Caco-2 (cell line): ENCODE measurements at regions of chr14 and their contacts with region 1.

Region 1: DNA sequence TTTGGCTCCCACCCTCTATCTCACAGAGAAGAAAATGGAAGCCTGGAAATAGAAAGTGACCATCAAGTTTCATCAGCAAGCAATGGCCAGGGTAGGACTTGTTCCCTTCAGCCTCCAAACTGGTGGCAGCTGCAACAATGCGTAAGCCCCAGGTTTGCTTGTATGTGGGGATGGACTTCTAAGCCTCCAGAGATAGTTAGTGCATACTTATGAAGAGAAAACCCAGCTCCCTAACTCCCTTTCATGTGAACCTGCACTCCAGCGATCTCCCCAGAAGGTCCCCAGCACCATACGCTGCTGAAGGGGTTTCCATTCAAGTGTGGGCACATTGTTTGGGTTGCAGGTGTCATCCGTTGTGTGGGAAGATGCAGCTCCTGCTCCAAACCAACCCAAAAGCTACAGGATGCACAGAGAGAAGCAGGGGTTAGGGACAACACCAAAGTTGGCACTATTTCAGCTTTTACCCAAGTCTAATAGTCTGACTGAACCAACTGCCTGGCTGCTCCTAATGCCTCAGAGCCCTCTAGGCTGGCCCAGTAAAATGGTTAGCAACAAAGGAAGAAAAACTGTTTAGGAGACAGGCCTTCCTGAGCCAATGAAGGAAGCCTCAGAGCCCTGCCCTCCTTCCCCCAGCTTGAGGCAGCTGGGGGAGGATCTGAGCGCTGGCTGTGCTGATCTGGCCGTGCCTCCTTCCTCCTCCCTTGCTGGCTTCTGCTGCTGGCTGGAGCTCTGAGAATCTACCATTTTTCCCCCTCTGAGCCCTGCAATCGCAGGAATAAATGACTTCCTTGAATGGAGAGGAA is 12.3 kb downstream of the ZFP36L1 start:
- DNase-seq: peak; percentile 21 to 35
- H3K4me3 ChIP-seq: no peak overlapping the region
- H3K4me3 Mint-ChIP-seq: peak overlapping the region; percentile 21
- H3K27ac Mint-ChIP-seq: peak overlapping the region; percentile 79
- H3K4me1 ChIP-seq: peaks cover 78% of the 10 kb centered on the region
- H3K4me1 Mint-ChIP-seq: peaks cover 39% of the 10 kb centered on the region
- H3K27me3 ChIP-seq: no peaks in the 10 kb centered on the region
- H3K27me3 Mint-ChIP-seq: no peaks in the 10 kb centered on the region
- CTCF ChIP-seq: no peak

Region 2: GRCh38 chr14:68137704-68138619 is 642.6 kb before region 1 on chr14:
- CTCF ChIA-PET with region 1: no interaction called
- POLR2A ChIA-PET with region 1: no interaction called
- intact Hi-C with region 1: no loop called
- DNase-seq: peak; percentile 35 to 72
- H3K4me3 ChIP-seq: no peak overlapping the region
- H3K4me3 Mint-ChIP-seq: no peak overlapping the region
- H3K27ac Mint-ChIP-seq: no peak overlapping the region
- H3K4me1 ChIP-seq: peaks cover 27% of the 10 kb centered on the region
- H3K4me1 Mint-ChIP-seq: peaks cover 7% of the 10 kb centered on the region
- H3K27me3 ChIP-seq: no peaks in the 10 kb centered on the region
- H3K27me3 Mint-ChIP-seq: no peaks in the 10 kb centered on the region
- CTCF ChIP-seq: no peak

Region 3: GRCh38 chr14:68621400-68622365 is 158.9 kb before region 1 on chr14:
- CTCF ChIA-PET with region 1: no interaction called
- POLR2A ChIA-PET with region 1: no interaction called
- intact Hi-C with region 1: no loop called
- DNase-seq: no peak
- H3K4me3 ChIP-seq: no peak overlapping the region
- H3K4me3 Mint-ChIP-seq: no peak overlapping the region
- H3K27ac Mint-ChIP-seq: no peak overlapping the region
- H3K4me1 ChIP-seq: peaks cover 25% of the 10 kb centered on the region
- H3K4me1 Mint-ChIP-seq: peaks cover 9% of the 10 kb centered on the region
- H3K27me3 ChIP-seq: no peaks in the 10 kb centered on the region
- H3K27me3 Mint-ChIP-seq: no peaks in the 10 kb centered on the region
- CTCF ChIP-seq: no peak

Region 4: GRCh38 chr14:68727315-68728047 is 53.1 kb before region 1 on chr14:
- CTCF ChIA-PET with region 1: no interaction called
- POLR2A ChIA-PET with region 1: no interaction called
- intact Hi-C with region 1: loop called (anchors 2 kb)
- DNase-seq: no peak
- H3K4me3 ChIP-seq: no peak overlapping the region
- H3K4me3 Mint-ChIP-seq: no peak overlapping the region
- H3K27ac Mint-ChIP-seq: peak overlapping the region; percentile 61
- H3K4me1 ChIP-seq: peaks cover 34% of the 10 kb centered on the region
- H3K4me1 Mint-ChIP-seq: peaks cover 30% of the 10 kb centered on the region
- H3K27me3 ChIP-seq: no peaks in the 10 kb centered on the region
- H3K27me3 Mint-ChIP-seq: no peaks in the 10 kb centered on the region
- CTCF ChIP-seq: no peak

Region 5: DNA sequence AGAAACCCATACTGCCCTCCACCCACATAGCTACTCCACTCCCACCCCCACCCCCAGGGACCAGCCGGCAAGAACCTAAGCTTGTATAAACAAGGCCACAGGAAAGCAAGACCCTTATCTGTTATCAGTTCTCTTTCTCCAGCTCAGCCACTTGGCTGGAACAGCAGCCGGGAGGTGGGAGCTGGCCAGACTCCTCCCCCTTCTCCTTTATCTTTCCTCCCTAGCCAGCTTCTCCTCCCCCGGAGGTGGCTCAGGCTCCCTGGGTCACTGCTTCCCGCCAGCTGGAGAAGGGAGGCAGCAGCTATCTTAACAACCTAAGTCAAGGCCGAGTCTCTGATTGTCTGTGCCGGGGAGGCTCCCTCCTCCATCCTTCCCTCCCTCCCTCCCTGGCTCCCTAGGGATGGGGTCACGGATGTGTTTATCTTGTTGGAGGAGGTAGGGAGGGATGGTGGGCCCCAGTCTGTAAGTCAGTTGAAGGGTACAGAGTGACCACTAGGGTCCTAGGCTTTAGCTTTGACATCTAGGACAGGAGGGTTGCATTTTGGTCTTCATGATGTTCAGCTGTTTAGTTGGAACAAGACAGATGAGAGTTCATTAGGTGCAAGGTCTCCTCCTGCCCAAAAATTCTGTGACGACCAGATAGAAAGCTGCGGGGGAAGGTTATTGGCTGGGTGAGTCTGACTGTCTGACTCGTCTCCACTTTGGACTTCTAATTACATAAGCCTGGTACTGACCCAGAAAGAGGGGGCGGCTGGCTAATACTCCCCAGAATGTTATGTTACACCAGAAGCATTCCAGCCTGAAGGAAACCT is 17.4 kb before region 1 on chr14:
- CTCF ChIA-PET with region 1: interaction called, 6 read pairs
- POLR2A ChIA-PET with region 1: interaction called, 6 read pairs
- intact Hi-C with region 1: loop called (anchors 1 kb)
- DNase-seq: peak; percentile 85 to 88
- H3K4me3 ChIP-seq: no peak overlapping the region
- H3K4me3 Mint-ChIP-seq: peak overlapping the region; percentile 43
- H3K27ac Mint-ChIP-seq: peak overlapping the region; percentile 57
- H3K4me1 ChIP-seq: peaks cover 45% of the 10 kb centered on the region
- H3K4me1 Mint-ChIP-seq: peaks cover 32% of the 10 kb centered on the region
- H3K27me3 ChIP-seq: no peaks in the 10 kb centered on the region
- H3K27me3 Mint-ChIP-seq: no peaks in the 10 kb centered on the region
- CTCF ChIP-seq: no peak

Region 6: GRCh38 chr14:68961781-68962584 is 181.4 kb after region 1 on chr14:
- CTCF ChIA-PET with region 1: no interaction called
- POLR2A ChIA-PET with region 1: no interaction called
- intact Hi-C with region 1: no loop called
- DNase-seq: no peak
- H3K4me3 ChIP-seq: no peak overlapping the region
- H3K4me3 Mint-ChIP-seq: no peak overlapping the region
- H3K27ac Mint-ChIP-seq: peak overlapping the region; percentile 27
- H3K4me1 ChIP-seq: peaks cover 34% of the 10 kb centered on the region
- H3K4me1 Mint-ChIP-seq: peaks cover 12% of the 10 kb centered on the region
- H3K27me3 ChIP-seq: no peaks in the 10 kb centered on the region
- H3K27me3 Mint-ChIP-seq: no peaks in the 10 kb centered on the region
- CTCF ChIP-seq: no peak